Activated CD4-positive, alpha-beta memory T cell treated with anti-CD3 and anti-CD28 coated beads for 36 hours (primary cell): ENCODE measurements at regions of chr1 and their contacts with region 1.

Region 1: DNA sequence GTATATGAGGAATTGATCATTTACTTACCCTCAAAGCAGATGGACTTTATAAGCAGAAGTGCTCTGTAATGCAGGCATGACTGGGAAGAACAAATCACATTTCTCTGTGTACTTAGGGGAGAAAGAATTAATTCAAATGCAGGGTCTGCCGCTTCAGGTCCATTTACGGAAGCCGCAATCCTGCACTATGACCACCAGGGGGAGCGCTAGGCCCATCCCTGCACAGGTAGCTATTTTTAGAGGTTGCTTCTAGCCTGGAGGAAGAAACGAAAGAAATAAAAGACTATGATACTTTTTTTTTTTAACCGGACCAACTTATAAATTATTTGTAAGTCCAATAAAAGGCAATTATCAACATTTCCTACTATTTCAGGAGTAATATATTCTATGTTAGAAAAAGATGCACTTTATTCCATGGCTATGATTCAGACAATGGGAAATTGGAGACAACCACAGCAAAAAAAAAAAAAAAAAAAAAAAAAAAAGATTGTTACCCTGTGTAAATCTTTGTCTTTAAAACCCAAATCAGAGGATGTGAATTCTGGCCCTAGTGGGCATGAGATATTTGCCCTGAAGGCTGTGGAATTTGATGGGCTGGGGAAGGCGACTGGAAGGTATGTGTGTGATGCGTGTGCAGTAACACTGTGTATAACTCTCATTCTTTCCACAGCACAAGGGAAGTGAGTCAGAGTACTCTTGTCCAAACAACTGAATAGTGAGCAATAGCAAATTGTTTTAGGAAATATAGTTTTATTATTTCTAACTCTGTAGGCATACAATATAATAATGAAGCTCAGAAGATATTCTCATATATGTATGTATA is 12.9 kb upstream of the FYB2 start:
- DNase-seq: peak; percentile 76
- H3K4me3 Mint-ChIP-seq: no peak overlapping the region
- H3K27ac Mint-ChIP-seq: no peak overlapping the region
- H3K4me1 Mint-ChIP-seq: peaks cover 4% of the 10 kb centered on the region
- H3K27me3 Mint-ChIP-seq: peaks cover 3% of the 10 kb centered on the region

Region 2: DNA sequence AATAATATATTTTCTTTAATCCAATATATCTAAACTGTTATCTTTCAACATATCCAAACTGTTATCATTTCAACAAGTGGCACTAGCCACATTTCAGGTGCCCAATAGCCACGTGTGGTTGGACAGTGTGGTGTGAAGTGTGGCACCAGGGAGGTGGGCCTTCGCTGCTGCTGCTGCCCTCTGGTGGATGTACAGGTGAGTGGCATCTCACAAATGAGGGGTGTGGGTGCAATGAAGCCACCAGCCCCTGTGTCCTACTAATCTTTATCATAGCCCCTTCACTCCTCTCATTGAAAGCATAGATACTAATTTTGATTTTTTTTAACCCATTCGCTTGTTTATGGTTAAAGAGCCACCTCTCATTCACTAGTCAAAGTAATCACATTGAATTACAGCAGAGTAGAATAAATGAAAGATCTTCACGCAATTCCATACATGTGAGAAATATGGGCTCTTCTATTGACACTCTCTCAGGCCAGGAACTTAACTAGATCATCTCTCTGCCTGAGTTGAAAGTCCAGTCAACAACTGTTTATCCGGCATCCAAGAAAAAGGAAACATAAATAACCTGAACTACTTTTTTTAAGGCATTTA is 1215.3 kb after region 1 on chr1:
- CTCF ChIA-PET with region 1: interaction called, 5 read pairs
- POLR2A ChIA-PET with region 1: no interaction called
- intact Hi-C with region 1: loop called (anchors 2 kb)
- DNase-seq: peak; percentile 28
- H3K4me3 Mint-ChIP-seq: no peak overlapping the region
- H3K27ac Mint-ChIP-seq: no peak overlapping the region
- H3K4me1 Mint-ChIP-seq: no peaks in the 10 kb centered on the region
- H3K27me3 Mint-ChIP-seq: no peaks in the 10 kb centered on the region

Region 3: GRCh38 chr1:58162952-58163550 is 1331.0 kb after region 1 on chr1:
- CTCF ChIA-PET with region 1: interaction called, 4 read pairs
- POLR2A ChIA-PET with region 1: no interaction called
- intact Hi-C with region 1: loop called (anchors 2 kb)
- DNase-seq: no peak
- H3K4me3 Mint-ChIP-seq: no peak overlapping the region
- H3K27ac Mint-ChIP-seq: no peak overlapping the region
- H3K4me1 Mint-ChIP-seq: no peaks in the 10 kb centered on the region
- H3K27me3 Mint-ChIP-seq: no peaks in the 10 kb centered on the region